Common myeloid progenitor, CD34-positive (primary cell): ENCODE measurements at regions of chr1 and their contacts with region 1.

Region 1: DNA sequence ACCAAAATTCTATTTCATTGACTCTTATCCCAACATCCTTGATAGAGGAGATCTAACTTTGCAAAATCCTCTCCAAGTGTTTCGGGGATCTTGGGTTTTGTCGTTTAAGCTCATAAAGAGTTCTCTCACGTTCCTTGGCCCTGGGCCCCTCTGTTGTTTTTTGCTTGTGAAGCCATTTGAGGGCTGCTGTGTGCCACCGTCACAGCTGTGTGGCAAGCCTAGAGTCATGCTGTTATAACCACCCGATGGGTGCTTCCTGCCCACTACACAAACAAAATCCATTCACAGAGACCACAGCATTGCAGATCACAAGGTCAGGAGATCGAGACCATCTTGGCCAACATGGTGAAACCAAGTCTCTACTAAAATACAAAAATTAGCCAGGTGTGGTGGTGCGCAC is 154.1 kb downstream of the ADSS2 start:
- DNase-seq: no peak
- H3K4me3 ChIP-seq: no peak overlapping the region
- H3K27ac ChIP-seq: no peak overlapping the region
- H3K4me1 ChIP-seq: peaks cover 0 to 13% (median 9%) of the 10 kb centered on the region in 4 experiments
- H3K27me3 ChIP-seq: no peaks in the 10 kb centered on the region

Region 2: GRCh38 chr1:243343970-243344937 is 953.4 kb before region 1 on chr1:
- CTCF ChIA-PET with region 1: interaction called, 10 read pairs
- POLR2A ChIA-PET with region 1: no interaction called
- DNase-seq: peak; percentile 52 to 71 (median 62)
- H3K4me3 ChIP-seq: no peak overlapping the region
- H3K27ac ChIP-seq: no peak overlapping the region
- H3K4me1 ChIP-seq: no peaks in the 10 kb centered on the region
- H3K27me3 ChIP-seq: no peaks in the 10 kb centered on the region

Region 3: GRCh38 chr1:244283772-244284171 is 13.8 kb before region 1 on chr1:
- CTCF ChIA-PET with region 1: interaction called, 18 read pairs
- POLR2A ChIA-PET with region 1: no interaction called
- DNase-seq: no peak
- H3K4me3 ChIP-seq: no peak overlapping the region
- H3K27ac ChIP-seq: no peak overlapping the region
- H3K4me1 ChIP-seq: no peaks in the 10 kb centered on the region
- H3K27me3 ChIP-seq: no peaks in the 10 kb centered on the region